ENCODE measurements at regions of chr11 and their contacts with region 1.

Region 1: DNA sequence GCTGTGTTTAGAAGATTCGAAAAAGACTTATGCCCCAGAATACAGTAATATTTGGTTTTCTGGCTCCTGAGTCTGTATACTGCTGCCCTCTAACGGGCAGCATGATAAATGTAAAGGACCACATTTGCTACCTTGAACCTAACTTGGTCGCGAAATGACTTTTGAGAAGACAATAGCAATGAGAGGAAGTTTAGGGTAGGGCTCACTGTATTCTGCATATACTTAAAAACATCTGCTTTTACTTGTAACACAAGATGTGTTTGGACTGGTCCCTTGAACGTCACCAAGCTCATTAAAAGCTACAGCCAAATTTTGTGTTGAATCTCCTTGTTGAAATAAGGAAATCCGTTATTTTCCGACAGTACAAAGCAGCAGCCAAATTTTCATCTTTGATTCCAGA is 309.1 kb downstream of the SWAP70 start:
- H3K4me3 ChIP-seq: no peak overlapping the region
- H3K27ac ChIP-seq: no peak overlapping the region
- H3K4me1 ChIP-seq: no peaks in the 10 kb centered on the region
- CTCF ChIP-seq: no peak

Region 2: GRCh38 chr11:9739123-9739894 is 233.7 kb before region 1 on chr11:
- CTCF ChIA-PET with region 1: no interaction called
- POLR2A ChIA-PET with region 1: no interaction called
- H3K4me3 ChIP-seq: no peak overlapping the region
- H3K27ac ChIP-seq: no peak overlapping the region
- H3K4me1 ChIP-seq: no peaks in the 10 kb centered on the region
- CTCF ChIP-seq: no peak

Region 3: DNA sequence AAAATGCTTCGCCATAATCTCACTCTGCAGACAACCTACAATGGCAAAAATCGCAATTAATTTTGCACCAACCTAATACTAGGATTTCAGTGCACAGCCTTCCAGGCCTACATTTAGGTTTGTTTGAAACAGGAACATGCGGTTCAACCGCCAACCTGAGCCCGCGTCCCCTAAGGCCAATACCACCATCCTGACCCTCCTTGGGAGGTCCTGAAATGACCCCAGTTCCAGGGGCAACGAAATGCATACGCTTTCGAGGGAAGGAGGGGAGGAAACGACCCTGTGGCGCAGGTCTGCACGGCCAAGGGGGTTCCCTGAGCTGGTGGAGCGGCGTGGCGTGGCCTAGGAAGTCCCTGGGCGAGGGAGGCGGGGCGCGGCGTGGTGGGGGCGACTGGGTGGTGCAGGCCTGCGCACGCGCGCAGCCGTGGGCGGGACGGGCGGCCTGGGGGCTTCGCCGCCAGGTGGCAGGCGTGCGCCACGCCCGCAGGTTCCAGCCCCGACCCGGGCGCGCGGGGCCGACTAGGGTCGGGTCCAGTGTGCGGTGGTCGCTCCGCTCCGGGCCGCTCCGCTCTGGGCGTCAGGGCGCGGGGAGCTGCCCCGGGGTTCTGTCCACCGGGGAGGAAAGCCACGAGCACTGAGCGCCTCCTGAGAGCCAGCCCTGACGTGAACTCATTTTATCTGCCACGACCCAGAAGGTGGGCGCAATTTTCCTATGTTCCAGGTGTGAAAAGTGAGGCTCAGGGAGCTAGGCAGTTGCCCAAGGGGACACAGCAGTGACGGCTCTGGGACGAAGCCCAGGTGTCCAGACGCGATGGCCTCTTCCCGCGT is 215.0 kb before region 1 on chr11:
- CTCF ChIA-PET with region 1: interaction called, 19 read pairs
- POLR2A ChIA-PET with region 1: interaction called, 8 read pairs
- H3K4me3 ChIP-seq: peak overlapping the region; percentile 69
- H3K27ac ChIP-seq: peak overlapping the region; percentile 82
- H3K4me1 ChIP-seq: no peaks in the 10 kb centered on the region
- CTCF ChIP-seq: no peak

Region 4: DNA sequence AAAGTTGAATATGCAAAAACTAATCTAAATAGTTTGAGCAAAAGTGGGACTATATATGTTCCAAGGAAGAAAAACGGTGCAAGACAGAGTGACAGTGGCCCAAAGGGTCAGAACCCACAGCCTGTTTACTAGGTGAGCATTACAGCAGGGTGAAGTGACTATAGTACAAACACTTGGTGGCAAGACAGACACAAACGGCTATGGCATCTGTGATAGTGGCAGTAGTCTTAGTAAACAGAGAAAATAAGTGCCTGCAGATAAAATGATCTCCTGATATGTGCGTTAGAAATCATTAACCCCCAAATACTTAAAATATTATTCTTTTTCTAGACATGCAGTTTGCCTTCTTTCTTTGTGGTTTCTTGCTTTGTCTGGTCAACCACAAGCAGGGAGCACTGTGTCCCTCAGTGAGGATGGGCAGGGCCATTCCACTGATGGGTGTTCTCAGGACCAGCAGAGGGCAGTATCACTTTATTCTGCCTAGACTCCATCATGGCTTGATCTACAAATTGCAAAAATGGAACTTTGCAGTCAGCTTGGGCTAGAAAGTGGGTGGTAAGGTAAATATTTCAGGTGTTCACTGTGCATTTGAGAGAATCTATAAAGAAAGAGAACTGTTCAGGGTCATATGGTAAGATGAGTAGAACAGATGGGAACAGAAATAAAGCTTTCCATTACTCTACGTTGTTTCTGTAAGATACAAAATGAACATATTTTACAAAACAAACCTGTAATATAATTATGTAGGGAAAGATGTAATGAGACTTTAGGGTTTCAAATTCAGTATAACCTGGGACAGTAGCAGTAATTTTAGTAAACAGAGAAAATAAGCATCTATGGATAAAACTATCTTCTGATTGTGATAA is 110.9 kb before region 1 on chr11:
- CTCF ChIA-PET with region 1: interaction called, 19 read pairs
- POLR2A ChIA-PET with region 1: no interaction called
- H3K4me3 ChIP-seq: no peak overlapping the region
- H3K27ac ChIP-seq: no peak overlapping the region
- H3K4me1 ChIP-seq: peaks cover 12% of the 10 kb centered on the region; the same call in 1 of the 2 replicates
- CTCF ChIP-seq: no peak

Region 5: DNA sequence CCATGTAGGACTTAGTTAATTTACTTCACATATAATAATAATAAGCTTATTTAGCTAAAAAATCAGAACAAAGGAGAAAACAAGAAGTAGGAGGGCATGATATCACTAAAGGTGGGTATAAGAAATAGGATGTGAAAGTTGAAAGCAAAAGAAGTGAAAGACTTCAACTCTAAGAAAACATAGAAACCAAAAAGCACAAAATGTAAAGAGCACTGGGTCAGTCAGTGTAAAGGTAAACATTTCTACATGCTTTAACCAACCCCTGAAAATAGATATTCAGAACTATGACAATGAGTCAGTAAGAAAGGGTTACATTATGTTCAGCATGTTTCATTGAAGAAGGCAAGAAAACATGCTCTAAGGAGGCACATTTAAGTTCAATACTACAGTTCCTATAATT is 10.3 kb before region 1 on chr11:
- CTCF ChIA-PET with region 1: interaction called, 20 read pairs
- POLR2A ChIA-PET with region 1: no interaction called
- H3K4me3 ChIP-seq: no peak overlapping the region
- H3K27ac ChIP-seq: no peak overlapping the region
- H3K4me1 ChIP-seq: no peaks in the 10 kb centered on the region
- CTCF ChIP-seq: no peak

Region 6: GRCh38 chr11:9982800-9983579 is 10.0 kb after region 1 on chr11:
- CTCF ChIA-PET with region 1: interaction called, 12 read pairs
- POLR2A ChIA-PET with region 1: no interaction called
- H3K4me3 ChIP-seq: no peak overlapping the region
- H3K27ac ChIP-seq: no peak overlapping the region
- H3K4me1 ChIP-seq: no peaks in the 10 kb centered on the region
- CTCF ChIP-seq: no peak

Region 7: GRCh38 chr11:10322830-10323792 is 350.1 kb after region 1 on chr11:
- CTCF ChIA-PET with region 1: interaction called, 11 read pairs
- POLR2A ChIA-PET with region 1: no interaction called
- H3K4me3 ChIP-seq: no peak overlapping the region
- H3K27ac ChIP-seq: no peak overlapping the region
- H3K4me1 ChIP-seq: no peaks in the 10 kb centered on the region
- CTCF ChIP-seq: no peak

Region 8: DNA sequence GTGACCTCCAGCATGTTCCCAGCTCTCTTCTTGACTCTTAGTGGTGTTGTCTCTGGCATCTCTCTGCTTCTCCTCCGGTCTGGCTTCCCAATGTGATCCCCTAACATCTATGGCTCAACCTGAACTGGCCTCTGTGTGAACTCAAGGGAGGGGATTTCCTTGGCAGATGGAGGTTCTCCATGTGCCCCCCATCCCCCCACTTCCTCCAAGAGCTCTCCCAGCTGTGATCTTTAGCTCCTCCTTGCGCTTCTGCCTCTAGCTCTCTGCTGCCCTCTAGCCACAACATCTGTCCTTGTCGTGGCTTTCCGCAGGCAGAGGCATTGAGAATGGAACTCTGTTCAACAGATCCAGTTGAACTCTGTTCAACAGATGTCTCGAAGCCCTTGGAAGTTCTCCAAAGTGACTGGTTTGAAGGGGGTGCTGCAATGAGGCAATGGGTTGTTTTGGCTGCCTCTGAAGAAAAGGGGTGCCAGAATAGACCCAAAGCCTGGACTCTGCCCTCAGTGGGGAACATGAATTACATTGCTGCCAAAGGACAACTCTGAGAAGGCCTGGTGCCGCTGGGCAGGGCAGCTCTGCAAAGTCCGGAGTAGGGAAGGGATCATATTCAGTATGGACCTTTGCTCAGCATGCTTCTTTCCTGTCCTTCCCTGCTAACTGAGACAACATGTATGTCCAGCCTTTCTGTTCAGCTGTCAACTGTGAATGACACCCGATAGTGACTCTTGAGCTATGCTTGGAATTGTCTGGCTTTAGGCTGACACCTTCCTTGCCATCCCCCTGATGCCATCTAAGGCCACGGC is 393.8 kb after region 1 on chr11:
- CTCF ChIA-PET with region 1: interaction called, 11 read pairs
- POLR2A ChIA-PET with region 1: no interaction called
- H3K4me3 ChIP-seq: no peak overlapping the region
- H3K27ac ChIP-seq: no peak overlapping the region
- H3K4me1 ChIP-seq: no peaks in the 10 kb centered on the region
- CTCF ChIP-seq: peak; percentile 64